ENCODE measurements at regions of chr5 and their contacts with region 1.

Region 1: DNA sequence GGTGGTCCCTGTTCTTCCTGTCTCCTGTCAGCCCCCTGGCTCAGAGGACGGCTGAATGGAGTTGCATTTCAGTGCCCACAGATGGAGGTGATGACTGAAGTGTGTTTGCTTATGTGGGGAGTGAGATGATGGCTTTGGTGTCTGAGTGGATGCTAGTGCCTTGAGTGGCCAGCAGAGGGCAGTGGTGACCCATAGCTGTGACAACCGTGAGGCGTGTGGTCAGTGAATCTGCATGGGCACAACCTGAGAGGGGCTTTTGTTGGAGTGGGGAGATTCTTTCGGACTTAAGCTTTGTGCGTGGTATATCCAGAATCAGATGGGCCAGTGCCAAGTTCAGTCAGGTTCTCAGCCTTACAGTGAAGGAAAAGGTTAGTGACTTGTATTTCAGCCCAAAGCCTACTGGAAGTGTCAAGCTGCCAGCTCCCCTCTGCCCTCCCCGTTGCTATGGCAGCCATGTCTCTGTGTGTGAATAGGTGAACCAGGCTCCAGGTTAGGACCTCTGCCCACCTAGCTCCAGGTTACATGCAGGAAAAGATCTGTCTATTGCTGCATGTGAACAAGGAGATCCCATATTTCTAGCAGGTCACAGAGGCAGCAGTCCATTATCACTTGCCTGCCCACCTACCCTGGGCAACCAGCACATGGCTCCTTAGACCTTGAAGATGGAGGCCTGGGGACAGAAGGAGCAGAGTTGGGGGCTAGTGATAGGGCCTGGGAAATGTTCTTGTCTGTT is 14.7 kb upstream of the CXXC5 start:
- DNase-seq: peak; percentile 78
- ATAC-seq: peak; percentile 43
- H3K4me3 Mint-ChIP-seq: no peak overlapping the region
- H3K27ac Mint-ChIP-seq: peak overlapping the region; percentile 44
- H3K4me1 Mint-ChIP-seq: peaks cover 41% of the 10 kb centered on the region
- H3K27me3 Mint-ChIP-seq: no peaks in the 10 kb centered on the region

Region 2: GRCh38 chr5:139560752-139561654 is 72.5 kb before region 1 on chr5 and contains the start of gene UBE2D2:
- CTCF ChIA-PET with region 1: interaction called, 50 read pairs
- POLR2A ChIA-PET with region 1: interaction called, 5 read pairs
- DNase-seq: peak; percentile 98
- ATAC-seq: peak; percentile 90
- H3K4me3 Mint-ChIP-seq: peak within 1 kb of the TSS; percentile 91
- H3K27ac Mint-ChIP-seq: peak within 1 kb of the TSS; percentile 91
- H3K4me1 Mint-ChIP-seq: peaks cover 36% of the 10 kb centered on the region
- H3K27me3 Mint-ChIP-seq: no peaks in the 10 kb centered on the region
- total RNA-seq, gene UBE2D2: 227 to 232 TPM

Region 3: GRCh38 chr5:139619861-139620260 is 13.6 kb before region 1 on chr5:
- CTCF ChIA-PET with region 1: interaction called, 11 read pairs
- POLR2A ChIA-PET with region 1: no interaction called
- DNase-seq: no peak
- ATAC-seq: no peak
- H3K4me3 Mint-ChIP-seq: no peak overlapping the region
- H3K27ac Mint-ChIP-seq: no peak overlapping the region
- H3K4me1 Mint-ChIP-seq: peaks cover 6% of the 10 kb centered on the region
- H3K27me3 Mint-ChIP-seq: no peaks in the 10 kb centered on the region

Region 4: GRCh38 chr5:139670369-139671095 is 37.1 kb after region 1 on chr5:
- CTCF ChIA-PET with region 1: interaction called, 95 read pairs
- POLR2A ChIA-PET with region 1: interaction called, 8 read pairs
- DNase-seq: peak; percentile 58
- ATAC-seq: peak; percentile 38
- H3K4me3 Mint-ChIP-seq: peak overlapping the region; percentile 77
- H3K27ac Mint-ChIP-seq: peak overlapping the region; percentile 91
- H3K4me1 Mint-ChIP-seq: peaks cover 50% of the 10 kb centered on the region
- H3K27me3 Mint-ChIP-seq: no peaks in the 10 kb centered on the region

Region 5: GRCh38 chr5:139690064-139690802 is 56.8 kb after region 1 on chr5:
- CTCF ChIA-PET with region 1: interaction called, 185 read pairs
- POLR2A ChIA-PET with region 1: interaction called, 7 read pairs
- DNase-seq: peak; percentile 48
- ATAC-seq: no peak
- H3K4me3 Mint-ChIP-seq: no peak overlapping the region
- H3K27ac Mint-ChIP-seq: no peak overlapping the region
- H3K4me1 Mint-ChIP-seq: peaks cover 6% of the 10 kb centered on the region
- H3K27me3 Mint-ChIP-seq: no peaks in the 10 kb centered on the region

Region 6: DNA sequence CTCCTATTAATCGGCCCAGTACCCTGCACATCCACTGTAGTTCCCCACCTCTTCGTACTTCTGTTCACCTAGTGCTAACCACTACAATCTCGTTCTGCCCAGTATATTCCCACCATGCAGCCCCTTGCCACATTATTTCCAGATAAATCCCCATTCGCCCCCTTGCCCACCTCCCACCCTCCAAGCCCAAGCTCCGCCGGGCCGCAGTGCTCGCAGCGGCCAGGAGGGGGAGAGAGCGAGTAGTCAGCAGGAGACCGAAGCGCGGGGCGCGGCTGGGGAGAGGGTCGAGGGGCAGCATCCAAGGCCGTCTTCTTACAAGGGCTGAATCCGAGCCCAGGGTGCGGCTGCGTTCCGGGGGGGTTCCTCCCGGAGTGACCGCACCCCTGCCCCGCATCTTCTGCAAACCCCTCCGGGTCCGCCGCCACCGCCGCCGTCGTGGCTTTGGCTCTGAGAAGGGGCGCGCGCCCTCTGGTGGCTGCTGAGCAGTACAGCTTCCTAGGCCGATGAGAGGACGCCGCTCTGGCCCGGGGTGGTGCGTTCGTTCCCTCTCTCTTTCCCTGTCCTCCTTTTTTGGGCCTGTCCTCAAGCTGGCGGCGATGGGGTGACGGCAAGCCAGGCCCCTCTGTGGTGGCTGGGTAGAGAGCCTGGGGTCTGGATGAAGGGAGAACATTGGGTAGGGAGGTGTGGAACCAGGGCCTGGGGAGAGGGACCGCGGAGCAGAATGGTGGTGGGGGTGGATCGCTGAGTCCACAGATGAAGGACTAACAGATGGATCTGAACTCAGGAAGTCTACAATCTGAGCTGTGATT is 132.2 kb after region 1 on chr5:
- CTCF ChIA-PET with region 1: interaction called, 187 read pairs
- POLR2A ChIA-PET with region 1: interaction called, 3 read pairs
- DNase-seq: peak; percentile 86
- ATAC-seq: peak; percentile 91
- H3K4me3 Mint-ChIP-seq: peak overlapping the region; percentile 71
- H3K27ac Mint-ChIP-seq: no peak overlapping the region
- H3K4me1 Mint-ChIP-seq: peaks cover 16% of the 10 kb centered on the region
- H3K27me3 Mint-ChIP-seq: peaks cover 28% of the 10 kb centered on the region